ENCODE measurements at regions of chr15 and their contacts with region 1.

Region 1: GRCh38 chr15:25438601-25439368 is at the start of gene UBE3A:
- DNase-seq: peak; percentile 86
- H3K4me3 Mint-ChIP-seq: peak within 1 kb of the TSS; percentile 90
- H3K27ac Mint-ChIP-seq: peak within 1 kb of the TSS; percentile 86
- H3K4me1 Mint-ChIP-seq: peaks cover 33% of the 10 kb centered on the region
- H3K27me3 Mint-ChIP-seq: no peaks in the 10 kb centered on the region
- total RNA-seq, gene UBE3A: 111 and 115 TPM in 2 replicates

Region 2: DNA sequence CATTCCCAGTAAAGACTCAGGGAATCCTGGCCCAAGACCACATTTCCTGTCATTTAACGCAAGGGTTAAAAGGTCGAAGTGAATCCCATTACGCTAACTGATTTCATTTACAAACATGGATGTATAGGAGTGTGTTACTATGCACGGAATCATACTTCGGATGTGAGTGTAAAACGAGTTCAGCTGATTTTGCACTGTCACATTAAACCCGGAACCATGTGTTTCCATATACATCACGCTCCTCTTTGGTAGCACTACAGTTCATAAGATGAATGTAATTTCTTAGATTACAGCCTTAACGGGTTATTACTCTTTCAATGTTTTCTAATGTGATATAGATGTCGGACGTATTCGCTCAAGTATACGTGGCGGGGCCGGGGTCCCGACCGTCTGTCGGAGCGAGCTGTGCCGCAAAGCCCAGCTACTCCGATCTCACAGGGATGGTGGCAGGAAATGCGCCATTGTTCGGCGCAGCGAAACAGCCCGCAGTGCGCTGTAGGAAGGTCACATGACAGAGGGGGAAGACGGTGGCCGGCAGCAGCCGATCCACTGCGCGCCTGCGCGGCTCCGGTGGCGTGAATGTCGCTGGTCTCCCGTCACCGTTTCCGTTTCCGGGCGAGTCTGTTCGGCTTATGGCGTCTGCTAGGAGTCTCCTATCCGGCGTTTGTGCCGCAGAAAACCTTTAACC is 666.0 kb before region 1 on chr15:
- intact Hi-C with region 1: loop called (anchors 5 kb)
- DNase-seq: peak; percentile 34
- H3K4me3 Mint-ChIP-seq: peak overlapping the region; percentile 86
- H3K27ac Mint-ChIP-seq: peak overlapping the region; percentile 69
- H3K4me1 Mint-ChIP-seq: no peaks in the 10 kb centered on the region
- H3K27me3 Mint-ChIP-seq: no peaks in the 10 kb centered on the region

Region 3: GRCh38 chr15:25345943-25346342 is 92.8 kb before region 1 on chr15:
- intact Hi-C with region 1: loop called (anchors 5 kb)
- DNase-seq: no peak
- H3K4me3 Mint-ChIP-seq: no peak overlapping the region
- H3K27ac Mint-ChIP-seq: peak overlapping the region; percentile 52
- H3K4me1 Mint-ChIP-seq: no peaks in the 10 kb centered on the region
- H3K27me3 Mint-ChIP-seq: no peaks in the 10 kb centered on the region

Region 4: GRCh38 chr15:25372298-25372697 is 66.5 kb before region 1 on chr15:
- intact Hi-C with region 1: loop called (anchors 1 kb)
- DNase-seq: no peak
- H3K4me3 Mint-ChIP-seq: no peak overlapping the region
- H3K27ac Mint-ChIP-seq: no peak overlapping the region
- H3K4me1 Mint-ChIP-seq: no peaks in the 10 kb centered on the region
- H3K27me3 Mint-ChIP-seq: no peaks in the 10 kb centered on the region

Region 5: GRCh38 chr15:25410649-25411048 is 28.1 kb before region 1 on chr15:
- intact Hi-C with region 1: no loop called
- DNase-seq: no peak
- H3K4me3 Mint-ChIP-seq: no peak overlapping the region
- H3K27ac Mint-ChIP-seq: no peak overlapping the region
- H3K4me1 Mint-ChIP-seq: peaks cover 20% of the 10 kb centered on the region
- H3K27me3 Mint-ChIP-seq: no peaks in the 10 kb centered on the region

Region 6: GRCh38 chr15:25905140-25905539 is 466.4 kb after region 1 on chr15:
- intact Hi-C with region 1: no loop called
- DNase-seq: no peak
- H3K4me3 Mint-ChIP-seq: no peak overlapping the region
- H3K27ac Mint-ChIP-seq: no peak overlapping the region
- H3K4me1 Mint-ChIP-seq: peaks cover 14% of the 10 kb centered on the region
- H3K27me3 Mint-ChIP-seq: peaks cover 1% of the 10 kb centered on the region

Region 7: GRCh38 chr15:26082221-26083109 is 643.7 kb after region 1 on chr15:
- intact Hi-C with region 1: loop called (anchors 1 kb)
- DNase-seq: peak; percentile 90
- H3K4me3 Mint-ChIP-seq: peak overlapping the region; percentile 92
- H3K27ac Mint-ChIP-seq: peak overlapping the region; percentile 96
- H3K4me1 Mint-ChIP-seq: peaks cover 21% of the 10 kb centered on the region
- H3K27me3 Mint-ChIP-seq: peaks cover 5% of the 10 kb centered on the region